CD8-positive, alpha-beta T cell (primary cell): ENCODE measurements at regions of chr9 and their contacts with region 1.

Region 1: DNA sequence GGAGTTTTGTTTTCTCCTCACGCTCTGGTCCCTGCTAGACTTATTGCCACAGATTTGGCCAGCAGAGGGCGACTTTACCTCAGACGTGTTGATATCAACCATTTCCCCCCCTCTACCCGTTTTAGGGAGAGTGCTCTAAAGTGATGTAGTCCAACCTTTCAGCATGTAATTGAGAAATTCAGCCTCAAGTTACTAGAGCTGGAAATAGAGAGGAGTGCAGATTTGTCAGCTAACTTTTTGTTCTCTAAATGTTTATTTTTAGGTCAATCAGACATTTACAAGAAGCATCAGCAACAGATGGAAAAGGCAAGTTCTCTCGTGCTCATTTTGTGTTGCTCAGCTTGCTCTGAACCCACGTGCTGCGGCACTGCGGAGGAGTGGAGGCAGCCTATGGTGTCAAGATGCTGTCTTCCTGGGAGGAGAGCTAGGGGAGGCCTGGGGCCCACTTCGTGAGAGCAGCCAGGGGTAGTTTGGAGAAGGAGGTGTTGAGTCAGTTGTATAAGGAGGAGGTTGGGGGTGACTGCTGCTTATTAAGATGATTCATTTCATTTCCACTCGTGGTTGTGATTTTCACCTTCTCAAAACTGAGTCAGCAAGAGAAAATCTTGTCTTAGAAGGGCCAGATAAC is 53.6 kb downstream of the GPR107 start:
- DNase-seq: peak; percentile 68 to 91 (median 87)
- ATAC-seq: peak; percentile 90
- H3K4me3 ChIP-seq: no peak overlapping the region
- H3K4me3 Mint-ChIP-seq: no peak overlapping the region
- H3K27ac ChIP-seq: peak overlapping the region in 1 of 2 experiments; percentile 26
- H3K27ac Mint-ChIP-seq: peak overlapping the region; percentile 72
- H3K4me1 ChIP-seq: peaks cover 8% of the 10 kb centered on the region
- H3K4me1 Mint-ChIP-seq: peaks cover 14% of the 10 kb centered on the region
- H3K27me3 ChIP-seq: no peaks in the 10 kb centered on the region
- H3K27me3 Mint-ChIP-seq: no peaks in the 10 kb centered on the region
- CTCF ChIP-seq: peak; percentile 86

Region 2: DNA sequence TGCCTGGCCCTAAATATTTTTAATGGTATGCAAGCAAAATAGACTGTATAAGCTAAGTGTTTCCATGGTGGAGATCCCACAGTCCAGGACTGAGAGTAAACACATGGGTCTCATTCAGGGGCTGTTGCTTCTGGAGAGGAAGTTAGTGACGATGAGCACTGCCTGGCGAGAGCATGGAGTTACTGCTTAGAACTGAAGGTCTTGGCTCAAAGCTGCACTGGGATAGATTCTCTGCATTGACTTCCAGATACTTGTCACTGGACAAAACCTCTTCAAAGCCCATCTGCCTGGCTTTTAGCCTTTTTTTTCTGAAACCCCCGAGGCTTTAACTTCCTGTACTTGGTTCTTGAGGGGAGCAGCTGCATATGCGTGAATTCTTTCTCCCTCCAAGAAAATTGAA is 14.4 kb before region 1 on chr9:
- CTCF ChIA-PET with region 1: interaction called, 13 read pairs
- POLR2A ChIA-PET with region 1: no interaction called
- intact Hi-C with region 1: no loop called
- DNase-seq: no peak
- ATAC-seq: no peak
- H3K4me3 ChIP-seq: no peak overlapping the region
- H3K4me3 Mint-ChIP-seq: no peak overlapping the region
- H3K27ac ChIP-seq: no peak overlapping the region
- H3K27ac Mint-ChIP-seq: no peak overlapping the region
- H3K4me1 ChIP-seq: no peaks in the 10 kb centered on the region
- H3K4me1 Mint-ChIP-seq: peaks cover 4% of the 10 kb centered on the region
- H3K27me3 ChIP-seq: no peaks in the 10 kb centered on the region
- H3K27me3 Mint-ChIP-seq: no peaks in the 10 kb centered on the region
- CTCF ChIP-seq: no peak

Region 3: GRCh38 chr9:130128733-130129431 is 21.5 kb after region 1 on chr9:
- CTCF ChIA-PET with region 1: interaction called, 36 read pairs
- POLR2A ChIA-PET with region 1: interaction called, 5 read pairs
- intact Hi-C with region 1: loop called (anchors 2 kb)
- DNase-seq: peak; percentile 12 to 91 (median 56)
- ATAC-seq: peak; percentile 73
- H3K4me3 ChIP-seq: peak overlapping the region; percentile 26 to 34
- H3K4me3 Mint-ChIP-seq: peak overlapping the region; percentile 80
- H3K27ac ChIP-seq: peak overlapping the region; percentile 75 to 94
- H3K27ac Mint-ChIP-seq: peak overlapping the region; percentile 98
- H3K4me1 ChIP-seq: peaks cover 52% of the 10 kb centered on the region
- H3K4me1 Mint-ChIP-seq: peaks cover 54% of the 10 kb centered on the region
- H3K27me3 ChIP-seq: no peaks in the 10 kb centered on the region
- H3K27me3 Mint-ChIP-seq: no peaks in the 10 kb centered on the region
- CTCF ChIP-seq: no peak

Region 4: DNA sequence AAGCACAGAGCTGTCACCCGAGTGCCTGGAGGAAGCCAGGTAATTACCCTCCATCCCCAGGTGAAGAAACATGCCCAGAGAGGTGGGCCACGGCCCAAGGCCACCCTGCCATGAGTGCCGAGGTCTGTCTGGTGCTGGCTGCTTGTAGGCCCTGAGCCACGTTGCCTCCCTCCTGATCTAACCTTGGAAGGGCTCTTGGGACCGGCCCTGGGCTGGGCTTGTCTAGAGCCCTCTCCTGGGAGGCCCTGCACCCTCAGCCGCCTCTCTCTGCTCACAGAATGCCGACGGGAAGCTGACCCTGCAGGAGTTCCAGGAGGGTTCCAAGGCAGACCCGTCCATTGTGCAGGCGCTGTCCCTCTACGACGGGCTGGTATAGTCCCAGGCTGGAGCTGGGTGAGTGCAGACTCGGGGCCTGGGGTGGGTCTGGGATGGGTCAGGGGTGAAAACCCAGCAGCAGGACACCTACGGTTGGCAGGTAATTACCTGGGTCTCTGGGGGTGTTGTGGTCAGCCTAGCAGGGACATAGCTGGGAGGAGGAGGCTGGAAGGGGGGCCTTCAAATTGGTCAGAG is 118.8 kb after region 1 on chr9:
- CTCF ChIA-PET with region 1: interaction called, 15 read pairs
- POLR2A ChIA-PET with region 1: no interaction called
- intact Hi-C with region 1: no loop called
- DNase-seq: no peak
- ATAC-seq: no peak
- H3K4me3 ChIP-seq: no peak overlapping the region
- H3K4me3 Mint-ChIP-seq: no peak overlapping the region
- H3K27ac ChIP-seq: no peak overlapping the region
- H3K27ac Mint-ChIP-seq: no peak overlapping the region
- H3K4me1 ChIP-seq: no peaks in the 10 kb centered on the region
- H3K4me1 Mint-ChIP-seq: no peaks in the 10 kb centered on the region
- H3K27me3 ChIP-seq: no peaks in the 10 kb centered on the region
- H3K27me3 Mint-ChIP-seq: no peaks in the 10 kb centered on the region
- CTCF ChIP-seq: no peak

Region 5: DNA sequence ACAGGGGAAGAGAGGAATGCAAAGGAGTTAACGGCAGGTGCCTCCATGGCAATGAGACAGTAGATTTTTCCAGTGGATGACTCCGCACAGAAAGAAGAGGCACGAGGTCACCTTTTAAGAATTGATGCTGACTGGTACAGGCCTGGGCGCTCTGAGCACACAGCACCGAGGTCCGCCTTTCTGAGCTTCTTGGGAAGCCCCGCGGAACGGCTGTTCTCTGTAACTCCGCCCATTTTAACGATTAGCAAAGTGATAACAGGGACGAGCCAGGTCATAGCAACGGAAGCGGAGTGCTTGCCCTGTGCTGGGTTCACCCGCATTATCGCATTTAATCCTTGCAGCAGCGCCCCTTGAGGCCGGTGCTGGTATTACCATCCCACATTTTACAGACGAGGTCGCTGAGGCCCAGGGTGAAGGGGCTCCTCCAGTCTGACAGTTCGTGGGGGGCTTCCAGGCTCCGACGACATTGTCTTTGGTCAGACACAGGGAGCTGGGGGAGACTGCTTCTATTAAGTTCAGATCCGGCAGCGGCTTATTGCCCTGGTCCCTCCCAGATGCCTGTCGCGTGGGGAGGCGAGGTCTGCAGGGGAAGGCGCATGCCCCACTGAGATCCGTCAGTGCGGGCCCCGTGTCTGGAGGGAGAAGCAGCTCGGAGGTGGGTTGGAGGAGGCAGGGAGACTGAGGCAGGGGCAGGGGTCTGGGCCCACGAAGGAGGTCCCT is 135.8 kb after region 1 on chr9:
- CTCF ChIA-PET with region 1: interaction called, 232 read pairs
- POLR2A ChIA-PET with region 1: no interaction called
- intact Hi-C with region 1: loop called in 1 of 2 experiments (anchors 1 kb)
- DNase-seq: peak; percentile 61 to 88 (median 83)
- ATAC-seq: peak; percentile 92
- H3K4me3 ChIP-seq: peak overlapping the region in 1 of 2 experiments; percentile 24
- H3K4me3 Mint-ChIP-seq: peak overlapping the region; percentile 67
- H3K27ac ChIP-seq: no peak overlapping the region
- H3K27ac Mint-ChIP-seq: no peak overlapping the region
- H3K4me1 ChIP-seq: peaks cover 5% of the 10 kb centered on the region
- H3K4me1 Mint-ChIP-seq: peaks cover 17% of the 10 kb centered on the region
- H3K27me3 ChIP-seq: no peaks in the 10 kb centered on the region
- H3K27me3 Mint-ChIP-seq: no peaks in the 10 kb centered on the region
- CTCF ChIP-seq: peak; percentile 92